Left cardiac atrium (tissue), 4 donors: ENCODE measurements at regions of chr1 and their contacts with region 1.

Region 1: DNA sequence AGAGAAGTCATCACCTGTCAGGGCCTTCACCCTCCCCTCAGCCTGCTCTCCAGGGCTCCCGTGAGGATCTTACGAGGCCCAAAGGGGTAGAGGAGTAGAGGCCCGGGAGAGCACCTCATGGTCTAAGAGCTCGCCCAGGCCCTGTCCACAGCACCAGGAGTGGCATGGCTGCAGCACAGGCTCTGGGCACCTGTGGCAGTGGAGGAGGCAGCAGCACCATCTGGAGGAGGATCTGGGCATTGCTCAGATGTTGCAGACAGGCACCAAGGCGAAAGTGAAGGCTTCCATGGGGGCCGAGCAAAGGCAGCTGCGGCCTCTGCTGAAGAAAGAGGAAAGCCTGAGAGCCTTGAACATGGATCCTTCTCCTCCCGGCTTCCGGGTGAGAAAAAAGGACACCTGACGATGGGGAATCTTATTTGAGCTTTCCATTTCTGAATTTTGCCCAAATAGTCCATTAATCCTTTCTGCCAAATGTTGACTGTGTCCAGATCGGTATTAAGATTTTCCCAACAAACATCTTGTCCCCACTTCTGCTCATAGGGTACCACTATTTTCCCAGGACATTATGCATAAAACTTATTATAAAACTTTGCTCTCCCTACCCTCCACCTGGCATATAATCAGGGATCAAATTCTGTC is 604.7 kb downstream of the PTPRC start:
- DNase-seq: peak; percentile 39
- ATAC-seq: peak; percentile 63 to 73

Region 2: DNA sequence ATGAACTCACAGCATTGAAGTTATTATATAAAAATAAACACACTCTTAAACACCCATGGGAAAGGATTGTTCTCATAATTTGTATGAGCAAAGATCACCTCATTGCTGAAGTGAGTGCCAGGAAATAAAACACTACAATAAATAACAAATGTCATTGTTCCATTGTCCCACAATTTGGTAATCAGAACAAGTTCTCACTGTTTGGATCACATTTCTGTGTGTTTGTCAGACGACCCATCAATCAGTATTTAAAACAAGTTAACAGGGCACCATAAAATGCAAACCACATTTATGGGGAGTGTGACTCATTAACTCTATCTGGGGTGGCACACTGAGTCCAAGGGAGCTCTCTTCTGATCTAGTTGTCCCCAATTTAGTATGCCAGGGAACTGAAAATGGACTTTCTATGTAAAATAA is 480.2 kb before region 1 on chr1:
- intact Hi-C with region 1: loop called in 1 of 2 experiments (anchors 10 kb)
- DNase-seq: no peak
- ATAC-seq: no peak

Region 3: GRCh38 chr1:198880818-198881597 is 362.5 kb before region 1 on chr1:
- intact Hi-C with region 1: loop called in 1 of 2 experiments (anchors 5 kb)
- DNase-seq: no peak
- ATAC-seq: peak in 1 of 2 donors; percentile 95